ENCODE measurements at regions of chrX and their contacts with region 1.

Region 1: DNA sequence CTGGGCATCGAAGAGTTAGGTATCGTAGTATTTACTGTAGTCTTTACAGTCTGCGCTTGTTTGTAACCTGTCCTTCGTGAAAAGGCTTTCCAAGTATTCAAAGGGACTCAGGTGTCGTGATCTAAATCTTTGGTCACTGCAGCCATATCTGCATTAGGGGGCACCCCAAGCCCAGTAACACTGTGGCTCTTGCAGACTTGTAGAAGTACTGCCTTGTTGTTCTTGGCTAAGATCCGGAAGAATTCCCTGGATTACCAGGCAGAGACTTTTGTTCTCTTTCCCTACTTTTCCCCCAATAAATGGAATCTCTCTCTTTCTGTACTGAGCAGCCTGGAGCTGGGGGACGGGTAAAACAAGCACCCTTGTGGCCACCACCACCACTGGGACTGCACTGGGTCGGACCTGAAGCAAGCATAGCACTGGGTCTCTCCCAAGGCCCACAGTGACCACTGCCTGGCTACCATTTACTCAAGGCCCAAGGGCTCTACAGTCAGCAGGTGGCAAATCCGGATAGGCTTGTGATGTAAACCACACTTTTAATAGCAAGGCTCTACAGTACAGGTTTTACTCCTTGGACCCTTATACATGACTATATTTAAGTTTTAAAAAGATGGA is 12.0 kb downstream of the CXorf58 start:
- DNase-seq: no peak
- H3K4me3 ChIP-seq: no peak overlapping the region
- H3K4me1 ChIP-seq: no peaks in the 10 kb centered on the region
- H3K27me3 ChIP-seq: no peaks in the 10 kb centered on the region; the same call in 1 of the 2 replicates

Region 2: DNA sequence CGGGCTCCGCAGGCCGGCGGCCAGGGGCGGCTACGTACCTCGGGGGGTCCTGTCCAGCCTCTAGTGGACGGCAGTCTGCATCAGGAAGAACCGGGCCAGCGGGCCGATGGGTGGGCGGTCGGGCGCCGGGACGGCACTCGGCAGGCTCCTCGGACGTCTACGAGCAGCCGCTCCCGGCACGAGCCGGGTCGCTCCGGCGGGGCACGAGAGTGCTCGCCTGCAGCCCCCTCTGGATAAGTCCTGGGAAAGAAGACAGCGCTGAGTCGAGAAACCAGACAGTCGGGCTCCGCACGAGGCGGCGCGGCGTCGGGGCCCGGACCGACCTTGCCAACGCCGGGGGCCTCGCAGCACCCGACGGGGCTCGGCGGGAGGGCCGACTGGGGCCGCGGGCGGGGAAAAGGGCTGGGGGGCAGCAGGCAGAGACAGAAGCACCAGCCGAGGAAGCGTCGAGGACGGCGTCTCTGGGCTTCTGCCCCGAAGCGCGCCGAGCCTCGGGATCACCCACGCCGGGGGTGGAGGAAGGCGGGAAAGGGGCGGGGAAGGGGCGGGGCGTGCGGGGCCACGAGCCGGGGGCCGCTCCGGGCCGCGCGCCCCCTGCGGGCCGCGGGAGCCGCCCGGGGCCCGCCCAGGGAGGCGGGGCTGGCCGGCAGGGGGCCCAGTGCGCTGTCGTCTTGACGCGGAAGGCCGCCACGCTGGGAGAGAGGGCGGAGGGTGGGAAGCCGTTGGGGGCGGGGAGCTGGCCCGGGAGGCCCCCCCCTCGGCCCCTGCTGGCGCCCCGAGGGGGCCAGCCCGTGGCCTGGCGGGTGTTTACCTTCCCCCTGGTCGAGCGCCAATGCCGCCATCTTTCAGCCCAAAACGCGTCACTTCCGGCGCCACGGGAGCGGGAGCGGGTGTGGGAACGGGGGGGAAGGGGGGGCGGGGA is 105.3 kb after region 1 on chrX:
- in situ Hi-C with region 1: loop called (anchors 10 kb)
- DNase-seq: peak; percentile 88 to 95
- H3K4me3 ChIP-seq: peak overlapping the region; percentile 85
- H3K4me1 ChIP-seq: peaks cover 18% of the 10 kb centered on the region
- H3K27me3 ChIP-seq: no peaks in the 10 kb centered on the region